CD8-positive, alpha-beta T cell (primary cell): ENCODE measurements at regions of chr3 and their contacts with region 1.

Region 1: DNA sequence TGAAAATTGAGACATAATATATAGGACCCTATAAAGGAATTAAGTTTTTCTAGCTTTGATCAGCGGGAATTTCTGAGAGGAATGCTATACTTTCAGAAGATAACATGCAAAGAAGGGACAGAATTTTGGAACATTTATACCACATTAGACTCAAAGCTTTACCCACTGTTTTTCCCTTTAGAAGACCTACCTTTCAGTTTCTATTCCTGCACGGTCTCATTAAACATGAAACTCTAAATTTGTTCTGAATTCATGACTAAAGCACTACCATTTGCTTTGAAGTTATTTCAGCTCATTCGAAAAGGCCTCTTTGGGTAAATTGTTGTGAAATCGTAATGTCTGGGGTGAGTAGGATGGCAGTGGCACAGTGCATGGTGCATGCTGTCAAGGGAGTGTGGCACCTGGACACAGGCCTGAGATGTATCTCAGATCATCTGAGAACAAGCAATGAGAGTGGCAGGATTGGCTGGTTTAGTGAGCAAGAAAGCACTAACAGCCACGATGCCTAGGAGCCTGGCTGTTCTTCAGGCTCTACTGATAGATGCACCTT is 42.5 kb downstream of the CHCHD4 start:
- DNase-seq: no peak
- ATAC-seq: no peak
- H3K4me3 ChIP-seq: no peak overlapping the region
- H3K4me3 Mint-ChIP-seq: no peak overlapping the region
- H3K27ac ChIP-seq: no peak overlapping the region
- H3K27ac Mint-ChIP-seq: no peak overlapping the region
- H3K4me1 ChIP-seq: no peaks in the 10 kb centered on the region
- H3K4me1 Mint-ChIP-seq: no peaks in the 10 kb centered on the region
- H3K27me3 ChIP-seq: no peaks in the 10 kb centered on the region
- H3K27me3 Mint-ChIP-seq: peaks cover 2% of the 10 kb centered on the region
- CTCF ChIP-seq: no peak

Region 2: GRCh38 chr3:13537921-13538320 is 544.3 kb before region 1 on chr3:
- CTCF ChIA-PET with region 1: no interaction called
- POLR2A ChIA-PET with region 1: no interaction called
- intact Hi-C with region 1: no loop called
- DNase-seq: no peak
- ATAC-seq: no peak
- H3K4me3 ChIP-seq: no peak overlapping the region
- H3K4me3 Mint-ChIP-seq: no peak overlapping the region
- H3K27ac ChIP-seq: no peak overlapping the region
- H3K27ac Mint-ChIP-seq: no peak overlapping the region
- H3K4me1 ChIP-seq: peaks cover 9% of the 10 kb centered on the region
- H3K4me1 Mint-ChIP-seq: peaks cover 8% of the 10 kb centered on the region
- H3K27me3 ChIP-seq: no peaks in the 10 kb centered on the region
- H3K27me3 Mint-ChIP-seq: no peaks in the 10 kb centered on the region
- CTCF ChIP-seq: no peak

Region 3: GRCh38 chr3:14329116-14329830 is 247.1 kb after region 1 on chr3:
- CTCF ChIA-PET with region 1: no interaction called
- POLR2A ChIA-PET with region 1: no interaction called
- intact Hi-C with region 1: loop called in 1 of 2 experiments (anchors 5 kb)
- DNase-seq: no peak
- ATAC-seq: no peak
- H3K4me3 ChIP-seq: no peak overlapping the region
- H3K4me3 Mint-ChIP-seq: no peak overlapping the region
- H3K27ac ChIP-seq: no peak overlapping the region
- H3K27ac Mint-ChIP-seq: no peak overlapping the region
- H3K4me1 ChIP-seq: no peaks in the 10 kb centered on the region
- H3K4me1 Mint-ChIP-seq: no peaks in the 10 kb centered on the region
- H3K27me3 ChIP-seq: peaks cover 0 to 3% of the 10 kb centered on the region in 2 experiments
- H3K27me3 Mint-ChIP-seq: peaks cover 6% of the 10 kb centered on the region
- CTCF ChIP-seq: no peak

Region 4: DNA sequence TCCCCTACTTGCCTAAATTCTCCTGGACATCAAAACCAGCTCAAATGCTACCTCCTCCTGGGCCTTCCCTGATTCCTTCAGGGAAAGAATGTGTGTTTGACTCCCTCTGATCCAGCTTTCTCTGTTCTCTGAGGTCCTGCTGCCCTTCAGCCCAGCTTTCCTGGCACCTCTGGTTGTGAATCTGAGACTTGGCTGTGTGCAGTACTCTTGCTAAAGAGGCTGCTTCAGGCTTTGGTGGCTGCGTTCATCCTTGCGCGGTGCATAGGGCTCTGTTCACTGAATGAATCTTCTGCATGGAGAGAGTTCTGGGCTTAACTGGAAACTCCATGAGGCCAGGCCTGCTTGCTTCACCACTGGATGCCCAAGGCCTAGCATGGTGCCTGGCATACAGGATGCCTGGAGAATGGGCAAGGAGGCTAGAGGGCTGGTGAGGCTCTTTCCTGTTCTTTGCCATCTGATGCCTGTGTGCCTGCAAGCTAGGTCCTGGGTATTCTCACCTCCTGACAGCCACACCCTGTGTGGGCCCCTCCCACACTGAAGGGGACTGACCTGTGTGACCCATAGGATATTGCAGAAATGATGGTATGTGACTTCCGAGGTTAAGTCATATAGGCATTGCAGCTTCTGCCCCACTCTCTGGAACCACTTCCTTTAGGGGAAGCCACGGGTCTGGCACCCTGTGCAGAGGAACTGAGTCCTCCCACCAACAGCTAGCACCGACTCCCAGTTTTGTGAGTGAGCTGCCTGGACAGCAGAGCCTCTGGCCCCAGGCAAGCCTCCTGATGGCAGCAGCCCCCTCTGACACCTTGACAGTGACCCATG is 295.4 kb after region 1 on chr3:
- CTCF ChIA-PET with region 1: no interaction called
- POLR2A ChIA-PET with region 1: no interaction called
- intact Hi-C with region 1: no loop called
- DNase-seq: peak; percentile 15 to 81 (median 41)
- ATAC-seq: peak; percentile 88
- H3K4me3 ChIP-seq: no peak overlapping the region
- H3K4me3 Mint-ChIP-seq: no peak overlapping the region
- H3K27ac ChIP-seq: no peak overlapping the region
- H3K27ac Mint-ChIP-seq: peak overlapping the region; percentile 56
- H3K4me1 ChIP-seq: peaks cover 16% of the 10 kb centered on the region
- H3K4me1 Mint-ChIP-seq: peaks cover 21% of the 10 kb centered on the region
- H3K27me3 ChIP-seq: no peaks in the 10 kb centered on the region
- H3K27me3 Mint-ChIP-seq: no peaks in the 10 kb centered on the region
- CTCF ChIP-seq: no peak